Panc1 (cell line): ENCODE measurements at regions of chr5 and their contacts with region 1.

Region 1: DNA sequence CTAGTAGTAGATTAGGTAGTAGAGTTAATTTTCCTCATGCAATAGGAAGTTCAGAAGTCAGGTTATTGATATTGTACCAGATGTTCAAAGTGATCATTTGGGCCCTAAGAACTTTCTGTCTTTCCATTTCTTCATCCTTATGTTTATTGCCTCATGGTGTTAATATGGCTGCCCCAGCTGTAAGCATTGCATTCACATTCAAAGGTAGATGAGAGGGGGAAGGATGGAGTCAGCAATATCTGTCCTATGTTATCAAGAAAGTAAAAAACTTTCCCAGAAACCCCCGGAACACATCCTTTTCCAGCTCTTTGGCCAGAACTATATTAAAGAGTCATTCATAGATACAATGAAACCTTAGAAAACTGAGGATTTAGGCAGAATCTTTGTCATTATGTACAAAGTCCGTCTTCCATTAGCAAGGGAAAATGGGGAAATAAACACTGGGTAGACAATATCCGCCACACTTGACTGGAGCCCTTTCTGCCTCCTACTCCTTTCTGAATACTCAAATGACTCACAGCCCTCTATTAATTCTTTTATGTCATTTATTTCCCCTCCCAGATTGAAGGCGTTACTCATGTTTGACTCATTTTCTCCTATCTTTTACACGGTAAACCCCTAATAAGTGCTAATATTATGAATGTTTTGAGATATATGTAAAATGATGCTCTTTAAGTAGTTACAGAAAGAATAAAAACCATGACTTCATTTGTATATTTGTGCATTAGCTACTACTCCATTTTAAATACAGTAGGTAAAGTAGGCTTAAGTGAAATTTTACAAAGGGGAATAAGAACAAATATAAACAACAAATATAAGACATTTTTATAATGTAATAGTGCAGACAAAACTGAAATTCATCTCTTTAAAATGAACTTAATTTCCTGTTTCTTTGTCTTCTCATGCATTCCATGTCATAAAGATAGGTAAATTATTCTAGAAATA is 127.6 kb downstream of the SLF1 start:
- DNase-seq: no peak
- ATAC-seq: no peak
- H3K4me3 ChIP-seq: no peak overlapping the region
- H3K27ac ChIP-seq: no peak overlapping the region
- H3K4me1 ChIP-seq: no peaks in the 10 kb centered on the region
- H3K27me3 ChIP-seq: no peaks in the 10 kb centered on the region
- CTCF ChIP-seq: no peak

Region 2: GRCh38 chr5:94715671-94716211 is 30.3 kb before region 1 on chr5:
- CTCF ChIA-PET with region 1: no interaction called
- POLR2A ChIA-PET with region 1: interaction called, 12 read pairs
- in situ Hi-C with region 1: no loop called
- intact Hi-C with region 1: no loop called
- DNase-seq: no peak
- ATAC-seq: no peak
- H3K4me3 ChIP-seq: no peak overlapping the region
- H3K27ac ChIP-seq: no peak overlapping the region
- H3K4me1 ChIP-seq: no peaks in the 10 kb centered on the region
- H3K27me3 ChIP-seq: no peaks in the 10 kb centered on the region
- CTCF ChIP-seq: no peak

Region 3: GRCh38 chr5:94857111-94857510 is 111.1 kb after region 1 on chr5:
- CTCF ChIA-PET with region 1: no interaction called
- POLR2A ChIA-PET with region 1: no interaction called
- in situ Hi-C with region 1: no loop called
- intact Hi-C with region 1: no loop called
- DNase-seq: no peak
- ATAC-seq: no peak
- H3K4me3 ChIP-seq: no peak overlapping the region
- H3K27ac ChIP-seq: no peak overlapping the region
- H3K4me1 ChIP-seq: no peaks in the 10 kb centered on the region
- H3K27me3 ChIP-seq: no peaks in the 10 kb centered on the region
- CTCF ChIP-seq: no peak

Region 4: GRCh38 chr5:95029569-95030366 is 283.7 kb after region 1 on chr5:
- CTCF ChIA-PET with region 1: no interaction called
- POLR2A ChIA-PET with region 1: interaction called, 12 read pairs
- in situ Hi-C with region 1: no loop called
- intact Hi-C with region 1: no loop called
- DNase-seq: no peak
- ATAC-seq: peak; percentile 42; the same call in 1 of the 2 replicates
- H3K4me3 ChIP-seq: no peak overlapping the region
- H3K27ac ChIP-seq: no peak overlapping the region
- H3K4me1 ChIP-seq: no peaks in the 10 kb centered on the region
- H3K27me3 ChIP-seq: no peaks in the 10 kb centered on the region
- CTCF ChIP-seq: no peak